Right lobe of liver (tissue), 6 donors: ENCODE measurements at regions of chr7 and their contacts with region 1.

Region 1: DNA sequence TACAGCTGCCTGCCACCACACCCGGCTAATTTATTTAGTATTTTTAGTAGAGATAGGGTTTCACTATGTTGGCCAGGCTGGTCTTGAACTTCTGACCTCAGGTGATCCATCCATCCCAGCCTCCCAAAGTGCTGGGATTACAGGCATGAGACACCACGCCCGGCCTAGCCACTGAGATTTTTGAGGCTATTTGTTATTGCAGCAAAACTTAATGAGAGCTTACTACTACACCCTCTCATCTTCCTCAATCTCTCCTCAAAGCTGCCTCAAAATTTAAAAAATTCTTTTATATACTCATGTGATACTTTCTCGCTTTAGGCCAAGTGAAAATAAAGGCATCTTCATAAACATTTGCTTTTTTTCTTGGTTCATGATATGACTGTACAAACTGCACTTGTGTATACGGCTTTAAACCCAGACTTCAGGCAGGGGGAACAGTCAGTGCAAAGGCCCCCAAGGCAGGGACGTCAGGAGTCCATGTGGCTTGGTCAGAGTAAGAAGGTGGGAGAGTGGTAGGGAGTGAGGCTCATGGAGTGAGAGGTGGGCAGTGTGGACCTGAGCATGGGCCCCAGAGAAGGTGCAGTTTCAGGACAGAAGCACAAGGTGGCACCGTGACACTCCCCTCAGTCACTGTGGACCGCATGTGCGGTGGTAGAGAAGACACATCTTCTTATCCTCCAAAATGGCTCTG is 55.5 kb downstream of the SYPL1 start:
- DNase-seq: peak; percentile 68 to 72 (median 69)
- ATAC-seq: peak; percentile 97 to 99 (median 98)
- H3K4me3 ChIP-seq: no peak overlapping the region
- H3K27ac ChIP-seq: no peak overlapping the region
- H3K4me1 ChIP-seq: no peaks in the 10 kb centered on the region
- H3K27me3 ChIP-seq: no peaks in the 10 kb centered on the region
- CTCF ChIP-seq: peak; percentile 85 to 94 (median 86)
- POLR2A ChIP-seq: no peak

Region 2: DNA sequence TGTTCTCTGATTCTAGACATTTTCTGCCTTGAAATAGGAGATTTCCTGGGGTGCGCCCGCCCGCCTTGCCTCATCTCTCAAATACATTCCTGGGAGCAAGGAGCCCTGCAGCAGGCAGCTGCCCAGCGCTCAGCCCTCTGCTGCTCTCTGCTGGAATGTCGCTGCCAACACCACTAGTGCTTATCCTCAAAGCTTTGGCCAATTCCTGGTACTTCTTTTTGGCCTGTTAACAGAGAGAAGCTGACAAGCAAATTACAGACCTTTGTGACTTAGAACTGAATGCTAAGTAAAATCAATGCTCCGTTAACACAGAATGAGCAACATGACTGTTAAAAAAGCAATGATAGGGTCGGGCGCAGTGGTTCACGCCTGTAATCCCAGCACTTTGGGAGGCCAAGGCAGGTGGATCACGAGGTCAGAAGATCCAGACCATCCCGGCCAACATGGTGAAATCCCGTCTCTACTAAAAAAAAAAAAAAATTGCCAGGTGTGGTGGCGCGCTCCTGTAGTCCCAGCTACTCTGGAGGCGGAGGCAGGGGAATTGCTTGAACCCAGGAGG is 97.3 kb after region 1 on chr7:
- intact Hi-C with region 1: loop called (anchors 2 to 5 kb)
- DNase-seq: peak; percentile 78 to 83 (median 82)
- ATAC-seq: peak; percentile 99
- H3K4me3 ChIP-seq: no peak overlapping the region
- H3K27ac ChIP-seq: no peak overlapping the region
- H3K4me1 ChIP-seq: no peaks in the 10 kb centered on the region
- H3K27me3 ChIP-seq: no peaks in the 10 kb centered on the region
- CTCF ChIP-seq: peak; percentile 93 to 97 (median 94)
- POLR2A ChIP-seq: no peak

Region 3: DNA sequence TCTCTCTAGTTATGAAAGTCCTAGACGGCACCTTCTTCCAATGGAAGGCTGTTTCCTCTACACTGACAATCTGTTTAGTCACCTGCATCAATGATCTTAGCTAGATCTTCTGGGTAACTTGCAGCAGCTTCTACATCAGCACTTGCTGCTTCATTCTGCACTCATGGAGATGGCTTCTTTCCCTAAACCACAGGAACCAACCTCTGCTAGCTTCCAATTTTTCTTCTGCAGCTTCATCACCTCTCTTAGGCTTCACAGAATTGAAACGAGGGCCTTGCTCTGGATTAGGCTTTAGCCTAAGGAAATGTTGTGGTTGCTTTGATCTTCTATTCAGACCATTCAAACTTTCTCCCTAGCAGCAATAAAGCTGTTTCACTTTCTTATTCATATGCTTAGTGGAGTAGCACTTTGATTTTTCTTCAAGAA is 203.5 kb after region 1 on chr7:
- intact Hi-C with region 1: no loop called
- DNase-seq: no peak
- ATAC-seq: peak in 1 of 4 donors; percentile 3
- H3K4me3 ChIP-seq: no peak overlapping the region
- H3K27ac ChIP-seq: peak overlapping the region in 2 of 3 donors; percentile 10 to 12
- H3K4me1 ChIP-seq: peaks cover 0 to 46% (median 11%) of the 10 kb centered on the region in 4 donors
- H3K27me3 ChIP-seq: no peaks in the 10 kb centered on the region
- CTCF ChIP-seq: no peak
- POLR2A ChIP-seq: no peak